ENCODE measurements at regions of chr1 and their contacts with region 1.

Region 1: GRCh38 chr1:231357831-231358354 is 19.8 kb downstream of the SPRTN start:
- DNase-seq: peak; percentile 80
- H3K4me3 Mint-ChIP-seq: no peak overlapping the region
- H3K27ac Mint-ChIP-seq: no peak overlapping the region
- H3K4me1 Mint-ChIP-seq: peaks cover 12% of the 10 kb centered on the region
- H3K27me3 Mint-ChIP-seq: no peaks in the 10 kb centered on the region

Region 2: DNA sequence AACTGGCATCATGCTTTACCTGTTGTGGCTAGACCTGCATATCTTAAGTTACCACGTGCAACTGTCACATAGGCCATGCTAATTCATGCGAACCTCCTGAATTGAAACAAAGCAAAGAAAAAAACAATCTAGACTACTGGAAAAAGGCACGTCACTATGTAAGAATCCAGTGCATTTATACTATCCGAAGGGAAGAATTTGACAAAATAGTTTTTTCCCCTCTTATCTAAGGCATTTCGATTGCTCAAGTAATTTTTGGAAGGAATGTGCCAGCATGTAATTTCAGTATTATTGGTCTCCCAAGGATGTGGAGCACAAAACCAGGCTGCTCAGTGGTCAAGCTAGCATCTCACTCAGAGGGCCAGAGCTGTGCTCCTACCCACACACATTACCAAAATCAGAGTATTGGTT is 458.0 kb before region 1 on chr1:
- intact Hi-C with region 1: no loop called
- DNase-seq: no peak
- H3K4me3 Mint-ChIP-seq: no peak overlapping the region
- H3K27ac Mint-ChIP-seq: no peak overlapping the region
- H3K4me1 Mint-ChIP-seq: no peaks in the 10 kb centered on the region
- H3K27me3 Mint-ChIP-seq: no peaks in the 10 kb centered on the region

Region 3: DNA sequence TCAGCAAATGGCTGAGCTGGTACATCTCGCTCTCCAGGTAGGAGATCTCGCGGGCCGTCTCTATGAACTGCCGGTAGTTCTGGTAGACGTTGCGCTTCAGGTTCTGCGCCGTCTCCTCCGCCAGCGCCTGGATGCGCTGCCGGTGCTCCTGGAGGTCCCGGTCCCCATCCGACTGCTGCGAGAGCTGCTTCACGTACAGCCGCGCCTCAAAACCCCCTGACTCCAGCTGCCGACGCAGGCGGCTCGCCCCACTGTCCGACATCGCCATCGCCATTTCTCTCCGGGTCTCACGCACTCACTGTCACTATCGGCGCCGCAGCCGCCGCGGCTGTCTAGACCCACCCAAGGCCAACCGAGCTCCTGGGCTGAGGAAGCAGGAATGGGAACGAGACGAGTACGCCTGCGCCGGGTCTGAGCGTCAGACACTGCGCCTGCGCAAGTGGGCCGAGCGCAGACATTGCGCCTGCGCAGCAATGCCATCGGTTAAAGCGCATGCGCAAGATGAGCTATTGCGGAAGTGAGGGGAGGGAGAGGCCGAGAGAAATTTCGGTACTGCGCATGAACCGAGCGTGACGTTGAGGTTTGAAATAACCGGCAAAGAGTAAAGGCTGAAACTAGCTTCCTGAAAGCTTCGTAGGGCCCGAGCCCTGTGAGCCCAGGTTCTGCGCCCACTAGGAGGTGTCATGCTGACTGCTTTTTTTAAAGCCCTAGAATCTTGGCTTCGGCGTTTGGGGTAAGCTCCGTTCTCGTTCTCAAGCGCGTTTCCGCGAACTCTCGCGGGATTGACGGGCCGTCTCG is 20.2 kb before region 1 on chr1 and contains the start of gene EXOC8:
- intact Hi-C with region 1: loop called (anchors 2 kb)
- DNase-seq: peak; percentile 100
- H3K4me3 Mint-ChIP-seq: peak within 1 kb of the TSS; percentile 95
- H3K27ac Mint-ChIP-seq: peak within 1 kb of the TSS; percentile 98
- H3K4me1 Mint-ChIP-seq: peaks cover 44% of the 10 kb centered on the region
- H3K27me3 Mint-ChIP-seq: peaks cover 3% of the 10 kb centered on the region
- total RNA-seq, gene EXOC8: 12.4 and 13.3 TPM in 2 replicates

Region 4: GRCh38 chr1:231376875-231377549 is 19.1 kb after region 1 on chr1:
- intact Hi-C with region 1: loop called (anchors 2 kb)
- DNase-seq: peak; percentile 72
- H3K4me3 Mint-ChIP-seq: peak overlapping the region; percentile 17
- H3K27ac Mint-ChIP-seq: peak overlapping the region; percentile 76
- H3K4me1 Mint-ChIP-seq: peaks cover 28% of the 10 kb centered on the region
- H3K27me3 Mint-ChIP-seq: no peaks in the 10 kb centered on the region

Region 5: GRCh38 chr1:231571904-231572303 is 214.0 kb after region 1 on chr1:
- intact Hi-C with region 1: no loop called
- DNase-seq: no peak
- H3K4me3 Mint-ChIP-seq: no peak overlapping the region
- H3K27ac Mint-ChIP-seq: no peak overlapping the region
- H3K4me1 Mint-ChIP-seq: no peaks in the 10 kb centered on the region
- H3K27me3 Mint-ChIP-seq: no peaks in the 10 kb centered on the region

Region 6: DNA sequence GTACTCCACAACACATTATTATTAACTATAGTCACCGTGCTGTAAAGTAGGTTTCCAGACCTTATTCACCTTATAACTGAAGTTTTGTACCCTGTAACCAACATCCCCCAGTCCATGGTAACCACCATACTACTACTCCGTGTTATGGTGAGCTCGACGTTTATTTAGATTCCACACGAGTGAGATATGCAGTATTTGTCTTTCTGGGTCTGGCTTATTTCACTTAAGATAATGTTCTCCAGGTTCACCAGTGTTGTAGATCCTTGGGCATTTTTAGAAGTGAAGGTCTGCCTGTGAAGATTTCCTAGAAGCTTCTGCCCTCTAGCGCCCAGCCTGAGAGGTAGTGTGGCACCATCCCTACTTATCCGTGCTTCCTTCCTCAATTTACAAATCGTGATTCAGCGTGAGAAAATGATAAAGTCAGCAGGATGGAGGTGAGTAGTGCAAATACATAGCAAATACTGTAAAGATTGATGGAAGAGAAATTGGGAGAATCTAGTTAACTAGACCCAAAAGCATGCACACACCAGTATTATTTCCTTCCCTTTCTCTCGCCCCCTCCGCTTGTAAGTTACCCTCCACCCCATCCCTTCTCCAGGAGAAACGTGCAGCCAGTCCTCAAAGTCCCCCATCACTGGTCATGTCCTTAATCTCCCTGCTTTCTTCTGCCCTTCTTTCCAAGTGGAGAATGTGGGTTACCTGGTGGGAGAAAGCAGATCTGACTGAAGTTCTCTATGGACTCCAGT is 232.7 kb after region 1 on chr1:
- intact Hi-C with region 1: loop called (anchors 1 kb)
- DNase-seq: peak; percentile 81
- H3K4me3 Mint-ChIP-seq: no peak overlapping the region
- H3K27ac Mint-ChIP-seq: no peak overlapping the region
- H3K4me1 Mint-ChIP-seq: peaks cover 10% of the 10 kb centered on the region
- H3K27me3 Mint-ChIP-seq: peaks cover 3% of the 10 kb centered on the region

Region 7: GRCh38 chr1:231603598-231604275 is 245.8 kb after region 1 on chr1:
- intact Hi-C with region 1: loop called (anchors 1 kb)
- DNase-seq: peak; percentile 84
- H3K4me3 Mint-ChIP-seq: peak overlapping the region; percentile 89
- H3K27ac Mint-ChIP-seq: peak overlapping the region; percentile 65
- H3K4me1 Mint-ChIP-seq: peaks cover 12% of the 10 kb centered on the region
- H3K27me3 Mint-ChIP-seq: peaks cover 10% of the 10 kb centered on the region

Region 8: GRCh38 chr1:231872461-231872910 is 514.6 kb after region 1 on chr1:
- intact Hi-C with region 1: no loop called
- DNase-seq: no peak
- H3K4me3 Mint-ChIP-seq: no peak overlapping the region
- H3K27ac Mint-ChIP-seq: peak overlapping the region; percentile 25
- H3K4me1 Mint-ChIP-seq: peaks cover 8% of the 10 kb centered on the region
- H3K27me3 Mint-ChIP-seq: no peaks in the 10 kb centered on the region

Measured in activated CD4-positive, alpha-beta T cell treated with anti-CD3 and anti-CD28 coated beads, Interleukin-2, amount 10 ng/mL, durations not matched to agents 24 days and 14 days (primary cell).